ENCODE measurements at regions of chr2 and their contacts with region 1.

Region 1: DNA sequence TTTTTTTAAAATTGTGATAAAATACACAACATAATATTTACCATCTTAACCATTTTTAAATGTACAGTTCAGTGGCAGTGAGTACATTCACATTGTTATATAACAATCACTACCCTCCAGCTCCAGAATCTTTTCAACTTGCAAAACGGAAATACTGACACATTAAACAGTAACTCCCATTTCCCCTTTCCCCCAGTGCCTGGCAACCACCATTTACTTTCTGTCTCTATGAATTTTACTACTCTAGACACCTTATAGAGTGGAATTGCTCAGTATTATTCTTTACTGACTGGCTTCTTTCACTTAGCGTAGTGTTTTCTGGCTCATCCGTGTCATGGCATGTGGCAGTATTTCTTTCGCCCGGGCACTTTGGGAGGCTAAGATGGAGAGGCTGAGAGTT is 32.6 kb downstream of the FASTKD2 start:
- DNase-seq: no peak
- H3K4me3 ChIP-seq: no peak overlapping the region
- H3K27ac ChIP-seq: no peak overlapping the region
- H3K4me1 ChIP-seq: no peaks in the 10 kb centered on the region
- H3K27me3 ChIP-seq: no peaks in the 10 kb centered on the region
- CTCF ChIP-seq: no peak
- POLR2A ChIP-seq: no peak

Region 2: DNA sequence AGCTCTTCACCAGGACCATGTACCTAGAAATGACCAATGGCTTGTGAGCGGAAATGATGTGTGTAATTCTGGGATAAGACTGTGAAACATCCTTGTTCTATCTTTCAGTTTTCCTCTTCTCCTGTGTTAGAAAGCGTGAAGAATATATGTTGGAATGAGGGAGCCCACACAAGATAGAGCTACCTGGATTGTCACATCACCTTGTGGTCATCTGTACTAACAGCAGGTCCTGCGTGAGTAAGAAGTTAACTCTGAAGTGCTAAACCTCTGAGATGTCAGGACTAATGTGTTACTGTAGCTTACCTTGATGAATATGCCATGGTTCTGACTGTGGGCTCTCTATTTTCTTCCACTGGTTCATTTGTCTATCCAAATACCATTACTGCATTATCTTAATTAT is 43.0 kb after region 1 on chr2:
- intact Hi-C with region 1: no loop called
- DNase-seq: no peak
- H3K4me3 ChIP-seq: no peak overlapping the region
- H3K27ac ChIP-seq: no peak overlapping the region
- H3K4me1 ChIP-seq: no peaks in the 10 kb centered on the region
- H3K27me3 ChIP-seq: no peaks in the 10 kb centered on the region
- CTCF ChIP-seq: no peak
- POLR2A ChIP-seq: no peak

Region 3: GRCh38 chr2:207133820-207134519 is 336.0 kb after region 1 on chr2:
- intact Hi-C with region 1: no loop called
- DNase-seq: peak in 1 of 2 donors; percentile 23
- H3K4me3 ChIP-seq: peak overlapping the region in 1 of 3 donors; percentile 15
- H3K27ac ChIP-seq: peak overlapping the region; percentile 69 to 88
- H3K4me1 ChIP-seq: peaks cover 0 to 5% of the 10 kb centered on the region in 2 donors
- H3K27me3 ChIP-seq: no peaks in the 10 kb centered on the region
- CTCF ChIP-seq: no peak
- POLR2A ChIP-seq: no peak

Region 4: GRCh38 chr2:207487650-207488311 is 689.8 kb after region 1 on chr2:
- intact Hi-C with region 1: loop called (anchors 10 kb)
- DNase-seq: no peak
- H3K4me3 ChIP-seq: no peak overlapping the region
- H3K27ac ChIP-seq: no peak overlapping the region
- H3K4me1 ChIP-seq: no peaks in the 10 kb centered on the region
- H3K27me3 ChIP-seq: no peaks in the 10 kb centered on the region
- CTCF ChIP-seq: no peak
- POLR2A ChIP-seq: no peak

Region 5: GRCh38 chr2:207603486-207603885 is 805.5 kb after region 1 on chr2:
- intact Hi-C with region 1: no loop called
- DNase-seq: no peak
- H3K4me3 ChIP-seq: no peak overlapping the region
- H3K27ac ChIP-seq: no peak overlapping the region
- H3K4me1 ChIP-seq: no peaks in the 10 kb centered on the region
- H3K27me3 ChIP-seq: no peaks in the 10 kb centered on the region
- CTCF ChIP-seq: no peak
- POLR2A ChIP-seq: no peak

Measured in breast epithelium (tissue), 4 donors.